Brain microvascular endothelial cell (primary cell): ENCODE measurements at regions of chr3 and their contacts with region 1.

Region 1: DNA sequence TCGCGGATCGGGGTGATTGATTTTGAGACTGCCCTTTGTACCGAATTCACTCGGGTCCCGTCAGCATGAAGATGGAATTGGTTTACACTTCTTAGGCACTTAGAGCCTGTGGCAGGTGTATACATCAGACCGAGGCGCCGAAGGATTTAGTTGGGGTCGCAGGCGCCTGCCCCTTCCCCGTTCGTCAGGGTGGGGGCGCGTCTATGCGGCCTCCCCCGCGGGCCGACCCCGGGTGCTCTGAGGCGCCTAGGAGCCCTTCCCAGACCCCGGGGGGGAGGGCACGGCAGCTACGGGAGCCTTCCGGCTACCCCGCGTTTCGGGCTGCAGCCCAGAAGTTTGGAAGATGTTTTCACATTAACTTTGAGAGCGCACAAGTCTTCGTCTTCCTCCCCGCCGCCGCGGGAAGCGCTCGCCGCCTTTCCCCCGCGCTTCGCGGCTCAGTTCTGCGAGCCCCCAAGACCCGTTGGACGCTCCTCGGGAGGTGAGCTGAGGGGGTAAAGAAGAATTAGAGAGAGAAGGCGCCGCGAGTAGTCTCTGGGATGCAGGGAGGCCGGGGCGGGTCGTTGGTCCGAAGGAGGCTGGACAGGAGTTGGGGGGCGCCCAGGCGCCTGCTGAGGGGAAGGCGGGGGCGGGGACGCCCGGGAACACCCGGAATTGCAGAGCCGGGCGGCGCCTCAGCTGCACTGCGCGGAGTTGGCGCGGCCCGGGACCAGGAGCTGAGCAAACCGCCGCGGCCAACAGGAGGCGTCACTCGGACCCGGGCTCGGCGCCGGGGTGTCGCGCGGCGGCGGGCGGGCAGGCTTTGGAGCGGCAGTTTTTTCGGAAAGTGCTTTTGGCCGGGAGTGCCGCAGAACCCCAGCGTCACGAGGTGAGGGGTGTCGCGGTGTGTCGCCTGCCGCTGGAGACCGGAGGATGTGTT is 780 bp downstream of the TIPARP start:
- DNase-seq: peak; percentile 35
- H3K4me3 ChIP-seq: peak overlapping the region; percentile 86
- H3K27ac ChIP-seq: peak overlapping the region; percentile 91
- H3K27me3 ChIP-seq: no peaks in the 10 kb centered on the region
- CTCF ChIP-seq: peak; percentile 28

Region 2: GRCh38 chr3:156433138-156433537 is 242.0 kb before region 1 on chr3:
- in situ Hi-C with region 1: no loop called
- DNase-seq: peak; percentile 14
- H3K4me3 ChIP-seq: no peak overlapping the region
- H3K27ac ChIP-seq: no peak overlapping the region
- H3K27me3 ChIP-seq: no peaks in the 10 kb centered on the region
- CTCF ChIP-seq: no peak

Region 3: GRCh38 chr3:157081681-157082210 is 406.6 kb after region 1 on chr3:
- in situ Hi-C with region 1: loop called (anchors 25 kb)
- DNase-seq: peak; percentile 97
- H3K4me3 ChIP-seq: no peak overlapping the region
- H3K27ac ChIP-seq: peak overlapping the region; percentile 64
- H3K27me3 ChIP-seq: no peaks in the 10 kb centered on the region
- CTCF ChIP-seq: peak; percentile 97